CD8-positive, alpha-beta memory T cell (primary cell): ENCODE measurements at regions of chr3 and their contacts with region 1.

Region 1: GRCh38 chr3:155805802-155806618 is at the start of gene C3orf33:
- DNase-seq: peak; percentile 70 to 81 (median 77)
- H3K4me3 ChIP-seq: peak within 1 kb of the TSS; percentile 49
- H3K4me3 Mint-ChIP-seq: peak within 1 kb of the TSS; percentile 86 to 93 (median 90)
- H3K27ac ChIP-seq: peak within 1 kb of the TSS; percentile 59
- H3K27ac Mint-ChIP-seq: peak within 1 kb of the TSS; percentile 67 to 98 (median 92)
- H3K4me1 ChIP-seq: no peaks in the 10 kb centered on the region
- H3K4me1 Mint-ChIP-seq: peaks cover 20 to 39% (median 30%) of the 10 kb centered on the region in 3 donors
- H3K27me3 ChIP-seq: peaks cover 3% of the 10 kb centered on the region
- H3K27me3 Mint-ChIP-seq: peaks cover 4 to 7% of the 10 kb centered on the region in 2 donors
- total RNA-seq, gene C3orf33: 1.8 to 2.2 TPM

Region 2: DNA sequence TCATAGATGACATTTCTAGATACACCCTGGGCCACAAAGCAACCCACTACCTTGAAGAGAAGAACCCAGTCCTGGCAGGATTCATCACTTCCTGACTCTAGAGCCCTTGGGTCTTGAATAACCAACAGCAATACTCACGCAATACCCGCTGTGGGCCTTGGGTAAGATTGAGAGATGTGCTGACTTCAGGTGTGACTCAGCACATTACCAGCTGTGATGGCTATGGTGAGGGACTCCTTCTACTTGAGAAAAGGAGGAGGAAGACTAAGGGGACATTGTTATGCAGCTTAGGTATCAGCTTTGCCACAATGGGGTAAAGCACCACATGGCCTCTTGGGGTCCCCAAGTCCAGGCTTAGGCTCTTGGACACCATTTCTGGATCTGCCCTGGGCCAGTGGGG is 14.8 kb before region 1 on chr3:
- CTCF ChIA-PET with region 1: interaction called, 10 read pairs
- POLR2A ChIA-PET with region 1: no interaction called
- DNase-seq: no peak
- H3K4me3 ChIP-seq: no peak overlapping the region
- H3K4me3 Mint-ChIP-seq: no peak overlapping the region
- H3K27ac ChIP-seq: no peak overlapping the region
- H3K27ac Mint-ChIP-seq: peak overlapping the region in 1 of 8 donors; percentile 91
- H3K4me1 ChIP-seq: no peaks in the 10 kb centered on the region
- H3K4me1 Mint-ChIP-seq: peaks cover 2 to 17% (median 15%) of the 10 kb centered on the region in 3 donors
- H3K27me3 ChIP-seq: no peaks in the 10 kb centered on the region
- H3K27me3 Mint-ChIP-seq: no peaks in the 10 kb centered on the region

Region 3: GRCh38 chr3:155847993-155848392 is 42.0 kb after region 1 on chr3:
- CTCF ChIA-PET with region 1: interaction called, 44 read pairs
- POLR2A ChIA-PET with region 1: interaction called, 8 read pairs
- DNase-seq: no peak
- H3K4me3 ChIP-seq: no peak overlapping the region
- H3K4me3 Mint-ChIP-seq: peak overlapping the region in 6 of 7 donors; percentile 1 to 61 (median 3)
- H3K27ac ChIP-seq: no peak overlapping the region
- H3K27ac Mint-ChIP-seq: peak overlapping the region in 1 of 8 donors; percentile 77
- H3K4me1 ChIP-seq: peaks cover 38% of the 10 kb centered on the region
- H3K4me1 Mint-ChIP-seq: peaks cover 55 to 84% (median 82%) of the 10 kb centered on the region in 3 donors
- H3K27me3 ChIP-seq: no peaks in the 10 kb centered on the region
- H3K27me3 Mint-ChIP-seq: no peaks in the 10 kb centered on the region

Region 4: GRCh38 chr3:155863072-155863784 is 57.2 kb after region 1 on chr3:
- CTCF ChIA-PET with region 1: interaction called, 40 read pairs
- POLR2A ChIA-PET with region 1: interaction called, 10 read pairs
- DNase-seq: no peak
- H3K4me3 ChIP-seq: no peak overlapping the region
- H3K4me3 Mint-ChIP-seq: peak overlapping the region in 2 of 7 donors; percentile 38 to 57
- H3K27ac ChIP-seq: no peak overlapping the region
- H3K27ac Mint-ChIP-seq: peak overlapping the region in 6 of 8 donors; percentile 86 to 96 (median 92)
- H3K4me1 ChIP-seq: peaks cover 7% of the 10 kb centered on the region
- H3K4me1 Mint-ChIP-seq: peaks cover 13 to 27% (median 25%) of the 10 kb centered on the region in 3 donors
- H3K27me3 ChIP-seq: no peaks in the 10 kb centered on the region
- H3K27me3 Mint-ChIP-seq: peaks cover 0 to 1% of the 10 kb centered on the region in 2 donors

Region 5: DNA sequence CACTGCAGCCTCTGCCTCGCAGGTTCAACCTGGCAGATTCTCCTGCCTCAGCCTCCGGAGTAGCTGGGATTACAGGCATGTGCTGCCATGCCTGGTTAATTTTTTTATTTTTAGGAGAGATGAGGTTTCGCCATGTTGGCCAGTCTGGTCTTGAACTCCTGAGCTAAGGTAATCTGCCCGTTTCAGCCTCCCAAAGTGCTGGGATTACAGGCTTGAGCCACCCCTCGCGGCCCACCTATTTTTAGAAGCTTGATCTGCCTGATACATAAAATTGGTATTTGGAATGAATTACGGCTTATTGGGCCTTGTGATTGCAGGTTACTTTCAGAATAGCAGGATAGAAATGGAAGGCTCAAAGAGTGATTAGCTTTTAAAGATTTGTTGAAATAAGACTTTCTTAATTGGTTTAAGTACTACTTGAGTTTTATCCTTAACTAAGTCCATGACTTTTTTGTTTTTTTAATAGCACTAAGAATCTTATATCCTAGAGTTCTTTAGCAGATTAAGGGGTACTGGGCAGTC is 89.4 kb after region 1 on chr3:
- CTCF ChIA-PET with region 1: interaction called, 11 read pairs
- POLR2A ChIA-PET with region 1: no interaction called
- DNase-seq: no peak
- H3K4me3 ChIP-seq: no peak overlapping the region
- H3K4me3 Mint-ChIP-seq: no peak overlapping the region
- H3K27ac ChIP-seq: no peak overlapping the region
- H3K27ac Mint-ChIP-seq: no peak overlapping the region
- H3K4me1 ChIP-seq: no peaks in the 10 kb centered on the region
- H3K4me1 Mint-ChIP-seq: peaks cover 8 to 14% (median 11%) of the 10 kb centered on the region in 3 donors
- H3K27me3 ChIP-seq: no peaks in the 10 kb centered on the region
- H3K27me3 Mint-ChIP-seq: no peaks in the 10 kb centered on the region